Body of pancreas (tissue), 4 donors: ENCODE measurements at regions of chr13 and their contacts with region 1.

Region 1: GRCh38 chr13:27245610-27246009 is 5.7 kb upstream of the RPL21 start:
- DNase-seq: no peak
- ATAC-seq: no peak
- H3K4me3 ChIP-seq: no peak overlapping the region
- H3K27ac ChIP-seq: no peak overlapping the region
- H3K4me1 ChIP-seq: peaks cover 6% of the 10 kb centered on the region
- H3K27me3 ChIP-seq: no peaks in the 10 kb centered on the region
- CTCF ChIP-seq: no peak
- POLR2A ChIP-seq: no peak

Region 2: GRCh38 chr13:27177852-27178251 is 67.8 kb before region 1 on chr13:
- intact Hi-C with region 1: loop called (anchors 5 kb)
- DNase-seq: no peak
- ATAC-seq: no peak
- H3K4me3 ChIP-seq: no peak overlapping the region
- H3K27ac ChIP-seq: no peak overlapping the region
- H3K4me1 ChIP-seq: peaks cover 3% of the 10 kb centered on the region
- H3K27me3 ChIP-seq: no peaks in the 10 kb centered on the region
- CTCF ChIP-seq: no peak
- POLR2A ChIP-seq: no peak